Activated CD8-positive, alpha-beta T cell treated with anti-CD3 and anti-CD28 coated beads for 36 hours (primary cell): ENCODE measurements at regions of chr5 and their contacts with region 1.

Region 1: GRCh38 chr5:10353241-10354047 is at the start of gene MARCHF6:
- DNase-seq: peak; percentile 97
- ATAC-seq: peak; percentile 85
- H3K4me3 Mint-ChIP-seq: peak within 1 kb of the TSS; percentile 94
- H3K27ac Mint-ChIP-seq: peak within 1 kb of the TSS; percentile 98
- H3K4me1 Mint-ChIP-seq: peaks cover 37% of the 10 kb centered on the region
- H3K27me3 Mint-ChIP-seq: no peaks in the 10 kb centered on the region
- CTCF ChIP-seq: no peak
- total RNA-seq, gene MARCHF6: 92.8 to 95.6 TPM

Region 2: GRCh38 chr5:10249948-10250803 is 103.3 kb before region 1 on chr5 and contains the start of gene CCT5:
- CTCF ChIA-PET with region 1: interaction called, 3 read pairs
- POLR2A ChIA-PET with region 1: interaction called, 23 read pairs
- intact Hi-C with region 1: loop called (anchors 5 kb)
- DNase-seq: peak; percentile 92
- ATAC-seq: peak; percentile 84
- H3K4me3 Mint-ChIP-seq: peak within 1 kb of the TSS; percentile 84
- H3K27ac Mint-ChIP-seq: peak within 1 kb of the TSS; percentile 99
- H3K4me1 Mint-ChIP-seq: peaks cover 42% of the 10 kb centered on the region
- H3K27me3 Mint-ChIP-seq: no peaks in the 10 kb centered on the region
- CTCF ChIP-seq: no peak
- total RNA-seq, gene CCT5: 461 to 481 TPM

Region 3: GRCh38 chr5:10364186-10364683 is 10.8 kb after region 1 on chr5:
- CTCF ChIA-PET with region 1: interaction called, 11 read pairs
- POLR2A ChIA-PET with region 1: interaction called, 10 read pairs
- intact Hi-C with region 1: no loop called
- DNase-seq: no peak
- ATAC-seq: no peak
- H3K4me3 Mint-ChIP-seq: no peak overlapping the region
- H3K27ac Mint-ChIP-seq: no peak overlapping the region
- H3K4me1 Mint-ChIP-seq: peaks cover 67% of the 10 kb centered on the region
- H3K27me3 Mint-ChIP-seq: no peaks in the 10 kb centered on the region
- CTCF ChIP-seq: no peak

Region 4: DNA sequence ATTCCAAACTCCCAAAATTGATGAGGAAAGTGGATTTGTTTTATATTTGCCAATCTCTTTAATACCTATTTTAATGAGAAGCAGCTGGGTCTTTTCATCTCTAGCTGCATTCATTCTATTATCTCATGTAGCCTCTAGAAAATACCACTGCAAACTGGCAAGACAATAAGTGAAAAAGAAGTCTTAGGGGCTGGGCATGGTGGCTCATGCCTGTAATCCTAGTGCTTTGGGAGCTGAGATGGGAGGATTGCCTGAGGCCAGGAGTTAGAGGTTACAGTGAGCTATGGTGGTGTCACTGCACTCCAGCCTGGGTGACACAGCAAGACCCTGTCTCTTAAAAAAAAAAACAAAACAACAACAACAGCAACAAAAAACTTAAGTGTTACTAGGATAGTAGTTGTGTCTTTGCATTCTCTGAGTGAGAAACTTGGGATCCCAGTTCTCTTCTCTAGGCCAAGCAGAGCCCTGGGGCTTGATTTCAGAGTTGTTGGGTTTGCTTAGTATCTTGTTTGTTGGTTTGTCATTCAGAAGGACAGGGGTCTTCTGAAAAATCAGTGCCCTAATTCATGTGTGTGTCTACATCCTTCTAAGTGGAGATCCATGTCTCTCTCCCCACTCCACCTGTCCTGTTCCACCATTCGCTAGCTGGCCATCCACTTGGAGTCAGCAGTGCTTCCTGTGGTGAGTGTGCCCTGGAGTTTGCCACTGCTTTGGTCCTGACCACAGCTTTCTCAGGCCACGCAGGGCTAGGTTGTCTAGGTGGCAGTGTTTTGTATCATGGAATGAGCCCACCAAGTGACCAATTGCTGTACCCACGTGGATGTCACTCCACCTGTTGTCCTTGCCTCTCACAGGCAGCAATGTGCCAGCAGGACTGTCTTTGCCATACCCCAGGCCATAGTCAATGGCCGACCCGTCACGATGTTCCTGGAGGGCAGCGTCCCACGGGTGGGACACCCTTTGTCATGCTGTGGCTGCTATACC is 19.6 kb after region 1 on chr5:
- CTCF ChIA-PET with region 1: interaction called, 13 read pairs
- POLR2A ChIA-PET with region 1: interaction called, 9 read pairs
- intact Hi-C with region 1: no loop called
- DNase-seq: no peak
- ATAC-seq: no peak
- H3K4me3 Mint-ChIP-seq: no peak overlapping the region
- H3K27ac Mint-ChIP-seq: peak overlapping the region; percentile 48
- H3K4me1 Mint-ChIP-seq: peaks cover 78% of the 10 kb centered on the region
- H3K27me3 Mint-ChIP-seq: no peaks in the 10 kb centered on the region
- CTCF ChIP-seq: no peak

Region 5: GRCh38 chr5:10418654-10419345 is 65.4 kb after region 1 on chr5:
- CTCF ChIA-PET with region 1: interaction called, 12 read pairs
- POLR2A ChIA-PET with region 1: interaction called, 4 read pairs
- intact Hi-C with region 1: no loop called
- DNase-seq: no peak
- ATAC-seq: peak; percentile 66
- H3K4me3 Mint-ChIP-seq: no peak overlapping the region
- H3K27ac Mint-ChIP-seq: no peak overlapping the region
- H3K4me1 Mint-ChIP-seq: peaks cover 34% of the 10 kb centered on the region
- H3K27me3 Mint-ChIP-seq: no peaks in the 10 kb centered on the region
- CTCF ChIP-seq: no peak